Naive thymus-derived CD4-positive, alpha-beta T cell (primary cell): ENCODE measurements at regions of chr15 and their contacts with region 1.

Region 1: GRCh38 chr15:100602064-100602822 is at the starts of genes ASB7 and LINS1:
- DNase-seq: peak; percentile 97 to 100 (median 100)
- ATAC-seq: peak; percentile 97
- H3K4me3 ChIP-seq: peak within 1 kb of the TSS; percentile 97
- H3K4me3 Mint-ChIP-seq: no peak within 1 kb of the TSS
- H3K27ac ChIP-seq: peak within 1 kb of the TSS; percentile 91
- H3K27ac Mint-ChIP-seq: peak within 1 kb of the TSS in 6 of 9 donors; percentile 50 to 95 (median 85)
- H3K4me1 ChIP-seq: peaks cover 35 to 52% of the 10 kb centered on the region in 2 donors
- H3K4me1 Mint-ChIP-seq: peaks cover 32 to 68% (median 41%) of the 10 kb centered on the region in 7 donors
- H3K27me3 ChIP-seq: no peaks in the 10 kb centered on the region
- H3K27me3 Mint-ChIP-seq: no peaks in the 10 kb centered on the region
- total RNA-seq, gene ASB7: 15.4 to 27.2 (median 18.9) TPM
- total RNA-seq, gene LINS1: 50.7 to 116 (median 76.9) TPM

Region 2: GRCh38 chr15:99250494-99251435 is 1351.5 kb before region 1 on chr15:
- CTCF ChIA-PET with region 1: no interaction called
- POLR2A ChIA-PET with region 1: no interaction called
- intact Hi-C with region 1: loop called (anchors 1 kb)
- DNase-seq: peak; percentile 78 to 95 (median 92)
- ATAC-seq: peak; percentile 96
- H3K4me3 ChIP-seq: peak overlapping the region; percentile 76
- H3K4me3 Mint-ChIP-seq: peak overlapping the region in 8 of 10 donors; percentile 81 to 95 (median 92)
- H3K27ac ChIP-seq: peak overlapping the region; percentile 65
- H3K27ac Mint-ChIP-seq: peak overlapping the region; percentile 83 to 92 (median 90)
- H3K4me1 ChIP-seq: peaks cover 14 to 28% of the 10 kb centered on the region in 2 donors
- H3K4me1 Mint-ChIP-seq: peaks cover 24 to 32% (median 27%) of the 10 kb centered on the region in 7 donors
- H3K27me3 ChIP-seq: no peaks in the 10 kb centered on the region
- H3K27me3 Mint-ChIP-seq: no peaks in the 10 kb centered on the region

Region 3: GRCh38 chr15:100572362-100572983 is 29.8 kb before region 1 on chr15:
- CTCF ChIA-PET with region 1: interaction called, 7 read pairs
- POLR2A ChIA-PET with region 1: interaction called, 35 read pairs
- intact Hi-C with region 1: loop called (anchors 1 kb)
- DNase-seq: peak in 6 of 9 donors; percentile 22 to 52 (median 47)
- ATAC-seq: peak; percentile 67
- H3K4me3 ChIP-seq: peak overlapping the region; percentile 5
- H3K4me3 Mint-ChIP-seq: peak overlapping the region; percentile 34 to 86 (median 80)
- H3K27ac ChIP-seq: peak overlapping the region; percentile 65
- H3K27ac Mint-ChIP-seq: peak overlapping the region; percentile 84 to 99 (median 94)
- H3K4me1 ChIP-seq: peaks cover 0 to 36% of the 10 kb centered on the region in 2 donors
- H3K4me1 Mint-ChIP-seq: peaks cover 22 to 83% (median 70%) of the 10 kb centered on the region in 7 donors
- H3K27me3 ChIP-seq: no peaks in the 10 kb centered on the region
- H3K27me3 Mint-ChIP-seq: no peaks in the 10 kb centered on the region

Region 4: GRCh38 chr15:100713163-100713867 is 111.1 kb after region 1 on chr15:
- CTCF ChIA-PET with region 1: no interaction called
- POLR2A ChIA-PET with region 1: no interaction called
- intact Hi-C with region 1: no loop called
- DNase-seq: no peak
- ATAC-seq: no peak
- H3K4me3 ChIP-seq: no peak overlapping the region
- H3K4me3 Mint-ChIP-seq: no peak overlapping the region
- H3K27ac ChIP-seq: no peak overlapping the region
- H3K27ac Mint-ChIP-seq: no peak overlapping the region
- H3K4me1 ChIP-seq: no peaks in the 10 kb centered on the region
- H3K4me1 Mint-ChIP-seq: peaks cover 0 to 2% (median 0%) of the 10 kb centered on the region in 7 donors
- H3K27me3 ChIP-seq: no peaks in the 10 kb centered on the region
- H3K27me3 Mint-ChIP-seq: peaks cover 0 to 10% (median 6%) of the 10 kb centered on the region in 5 donors

Region 5: DNA sequence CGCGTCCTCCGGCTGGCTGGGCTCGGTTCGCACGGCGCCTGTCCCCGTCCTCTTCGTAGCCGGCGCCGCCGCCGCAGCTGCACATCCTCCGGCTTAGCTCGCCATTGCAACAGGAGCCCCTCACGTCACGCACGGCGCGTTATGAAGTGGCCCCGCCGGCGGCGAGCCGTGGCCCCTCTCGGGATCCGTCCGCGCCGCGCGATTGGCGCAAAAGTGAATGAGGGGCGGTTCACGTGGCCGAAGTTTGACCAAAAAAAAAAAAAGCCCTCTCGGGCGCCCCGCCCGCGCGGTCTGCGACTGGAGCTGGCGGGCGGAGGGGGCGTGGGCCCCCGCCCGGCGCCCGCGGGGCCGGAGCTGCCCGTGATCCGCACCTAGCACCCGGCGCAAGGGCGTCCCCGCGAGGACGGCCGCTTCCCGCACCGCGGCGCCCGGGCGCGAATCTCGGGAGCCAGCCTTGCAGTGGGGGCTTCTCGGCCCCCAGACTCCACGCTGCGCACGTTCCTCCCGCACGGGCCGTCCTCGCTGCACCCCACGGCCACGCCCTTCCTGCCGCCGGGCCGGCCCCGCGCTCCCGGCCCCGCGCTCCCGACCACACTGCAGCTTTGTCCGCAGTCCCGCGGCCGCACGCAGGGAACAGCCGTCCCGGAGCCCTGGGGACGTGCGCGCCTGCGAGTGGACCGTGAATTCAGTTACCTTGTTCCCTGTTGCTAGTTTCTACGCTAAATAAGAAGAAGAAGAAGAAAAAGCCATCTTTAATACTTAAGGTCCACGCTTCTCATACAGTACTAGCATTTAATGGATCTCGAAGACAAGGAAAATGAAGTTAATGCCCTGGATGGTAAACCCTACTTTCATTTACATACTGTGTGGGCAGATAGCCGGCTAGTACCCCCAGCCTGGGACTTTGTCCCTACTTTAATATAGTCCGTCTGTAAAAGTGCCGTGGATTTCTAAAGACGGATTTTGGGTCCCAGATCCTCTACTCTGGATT is 649.9 kb after region 1 on chr15 and contains the start of gene CHSY1:
- CTCF ChIA-PET with region 1: no interaction called
- POLR2A ChIA-PET with region 1: no interaction called
- intact Hi-C with region 1: loop called in 1 of 2 experiments (anchors 5 kb)
- DNase-seq: peak; percentile 71 to 91 (median 81)
- ATAC-seq: peak; percentile 91
- H3K4me3 ChIP-seq: peak within 1 kb of the TSS; percentile 64
- H3K4me3 Mint-ChIP-seq: peak within 1 kb of the TSS; percentile 84 to 97 (median 94)
- H3K27ac ChIP-seq: peak within 1 kb of the TSS; percentile 62
- H3K27ac Mint-ChIP-seq: peak within 1 kb of the TSS; percentile 77 to 96 (median 84)
- H3K4me1 ChIP-seq: peaks cover 17 to 21% of the 10 kb centered on the region in 2 donors
- H3K4me1 Mint-ChIP-seq: peaks cover 17 to 63% (median 37%) of the 10 kb centered on the region in 7 donors
- H3K27me3 ChIP-seq: no peaks in the 10 kb centered on the region
- H3K27me3 Mint-ChIP-seq: no peaks in the 10 kb centered on the region
- total RNA-seq, gene CHSY1: 8.9 to 47.0 (median 10.8) TPM

Region 6: GRCh38 chr15:101277038-101277882 is 675.0 kb after region 1 on chr15 and contains the start of gene SELENOS:
- CTCF ChIA-PET with region 1: no interaction called
- POLR2A ChIA-PET with region 1: no interaction called
- intact Hi-C with region 1: loop called (anchors 1 kb)
- DNase-seq: peak; percentile 74 to 98 (median 84)
- ATAC-seq: peak; percentile 99
- H3K4me3 ChIP-seq: peak within 1 kb of the TSS; percentile 92
- H3K4me3 Mint-ChIP-seq: peak within 1 kb of the TSS; percentile 86 to 99 (median 95)
- H3K27ac ChIP-seq: peak within 1 kb of the TSS; percentile 88
- H3K27ac Mint-ChIP-seq: peak within 1 kb of the TSS; percentile 80 to 96 (median 91)
- H3K4me1 ChIP-seq: peaks cover 11 to 21% of the 10 kb centered on the region in 2 donors
- H3K4me1 Mint-ChIP-seq: peaks cover 13 to 37% (median 24%) of the 10 kb centered on the region in 7 donors
- H3K27me3 ChIP-seq: no peaks in the 10 kb centered on the region
- H3K27me3 Mint-ChIP-seq: no peaks in the 10 kb centered on the region
- total RNA-seq, gene SELENOS: 24.8 to 42.2 (median 37.6) TPM

Region 7: GRCh38 chr15:101723874-101724674 is 1121.8 kb after region 1 on chr15 and contains the start of gene TARS3:
- CTCF ChIA-PET with region 1: no interaction called
- POLR2A ChIA-PET with region 1: no interaction called
- intact Hi-C with region 1: loop called (anchors 5 to 10 kb)
- DNase-seq: peak; percentile 84 to 97 (median 90)
- ATAC-seq: peak; percentile 97
- H3K4me3 ChIP-seq: peak within 1 kb of the TSS; percentile 77
- H3K4me3 Mint-ChIP-seq: peak within 1 kb of the TSS; percentile 79 to 97 (median 91)
- H3K27ac ChIP-seq: peak within 1 kb of the TSS; percentile 88
- H3K27ac Mint-ChIP-seq: peak within 1 kb of the TSS; percentile 83 to 97 (median 91)
- H3K4me1 ChIP-seq: peaks cover 5 to 11% of the 10 kb centered on the region in 2 donors
- H3K4me1 Mint-ChIP-seq: peaks cover 16 to 42% (median 35%) of the 10 kb centered on the region in 7 donors
- H3K27me3 ChIP-seq: no peaks in the 10 kb centered on the region
- H3K27me3 Mint-ChIP-seq: peaks cover 0 to 3% (median 0%) of the 10 kb centered on the region in 5 donors
- total RNA-seq, gene TARS3: 20.5 to 42.6 (median 23.6) TPM